ENCODE measurements at regions of chr12 and their contacts with region 1.

Region 1: GRCh38 chr12:130702966-130703732 is 12.9 kb downstream of the RIMBP2 start:
- DNase-seq: peak; percentile 72
- H3K4me3 ChIP-seq: no peak overlapping the region
- H3K27ac ChIP-seq: peak overlapping the region in 1 of 2 experiments; percentile 82; a peak in 2 of 4 replicates
- H3K4me1 ChIP-seq: peaks cover 0 to 51% of the 10 kb centered on the region in 2 experiments; a peak in 2 of 4 replicates
- H3K27me3 ChIP-seq: no peaks in the 10 kb centered on the region
- CTCF ChIP-seq: no peak
- EP300 ChIP-seq: no peak
- RAD21 ChIP-seq: no peak

Region 2: GRCh38 chr12:130563323-130563722 is 139.8 kb before region 1 on chr12:
- CTCF ChIA-PET with region 1: no interaction called
- POLR2A ChIA-PET with region 1: no interaction called
- DNase-seq: no peak
- H3K4me3 ChIP-seq: no peak overlapping the region
- H3K27ac ChIP-seq: peak overlapping the region in 1 of 2 experiments; percentile 60; a peak in 2 of 4 replicates
- H3K4me1 ChIP-seq: peaks cover 0 to 17% of the 10 kb centered on the region in 2 experiments; a peak in 2 of 4 replicates
- H3K27me3 ChIP-seq: no peaks in the 10 kb centered on the region
- CTCF ChIP-seq: no peak
- EP300 ChIP-seq: no peak
- RAD21 ChIP-seq: no peak

Region 3: GRCh38 chr12:130650131-130650530 is 53.0 kb before region 1 on chr12:
- CTCF ChIA-PET with region 1: no interaction called
- POLR2A ChIA-PET with region 1: no interaction called
- DNase-seq: peak; percentile 55
- H3K4me3 ChIP-seq: no peak overlapping the region
- H3K27ac ChIP-seq: peak overlapping the region in 1 of 2 experiments; percentile 58; a peak in 1 of 4 replicates
- H3K4me1 ChIP-seq: peaks cover 0 to 19% of the 10 kb centered on the region in 2 experiments; a peak in 1 of 4 replicates
- H3K27me3 ChIP-seq: no peaks in the 10 kb centered on the region
- CTCF ChIP-seq: no peak
- EP300 ChIP-seq: no peak
- RAD21 ChIP-seq: no peak

Region 4: DNA sequence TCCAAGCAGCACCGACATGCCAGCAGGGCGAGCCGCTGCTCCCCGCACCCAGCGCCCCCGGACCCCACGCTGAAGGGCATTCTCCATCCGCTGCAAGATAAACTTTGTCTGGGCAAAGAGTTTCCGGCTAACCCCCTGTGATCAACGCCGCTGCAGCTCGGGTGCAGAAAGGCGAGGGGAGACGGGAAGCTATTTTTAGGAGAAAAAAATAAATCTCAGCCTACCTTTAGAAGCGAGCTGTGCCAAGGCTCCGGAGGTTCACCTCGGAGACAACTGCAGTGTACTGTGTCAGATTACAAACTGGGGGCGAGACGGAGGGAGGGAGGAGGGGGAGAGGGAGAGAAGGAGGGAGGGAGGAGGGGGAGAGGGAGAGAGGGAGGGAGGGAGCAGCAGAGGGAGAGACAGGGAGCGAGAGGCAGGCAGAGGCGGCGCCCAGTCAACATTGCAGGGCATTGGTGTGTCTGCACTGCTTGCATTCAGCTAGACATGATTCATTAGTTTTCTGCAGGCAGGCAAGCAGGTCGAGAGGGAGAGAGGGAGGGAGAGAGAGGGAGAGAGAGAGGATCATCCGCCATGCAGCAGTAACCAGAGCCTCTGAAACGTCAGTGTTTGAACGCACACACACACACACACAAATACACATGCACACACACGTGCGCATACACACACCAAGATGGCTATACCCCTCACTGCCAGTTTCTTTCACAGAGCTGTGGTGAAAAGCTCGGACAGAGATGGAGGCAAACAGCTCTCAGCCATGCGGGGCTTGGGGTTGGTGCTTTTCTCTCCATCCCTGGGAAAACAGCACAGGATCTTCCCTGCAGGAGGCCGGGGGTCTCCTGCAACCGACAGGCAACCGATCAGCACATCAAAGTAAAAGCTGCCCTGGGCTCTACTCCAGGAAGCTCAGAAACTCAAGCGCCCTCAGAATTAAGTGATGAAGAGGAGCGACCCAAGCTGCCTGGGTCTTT is 13.1 kb after region 1 on chr12 and contains the start of gene RIMBP2:
- CTCF ChIA-PET with region 1: interaction called, 4 read pairs
- POLR2A ChIA-PET with region 1: interaction called, 10 read pairs
- DNase-seq: peak; percentile 62
- H3K4me3 ChIP-seq: peak within 1 kb of the TSS in 1 of 2 experiments; percentile 60; a peak in 2 of 4 replicates
- H3K27ac ChIP-seq: peak within 1 kb of the TSS in 1 of 2 experiments; percentile 84; a peak in 2 of 4 replicates
- H3K4me1 ChIP-seq: peaks cover 0 to 38% of the 10 kb centered on the region in 2 experiments; a peak in 1 of 4 replicates
- H3K27me3 ChIP-seq: no peaks in the 10 kb centered on the region
- CTCF ChIP-seq: no peak
- EP300 ChIP-seq: no peak
- RAD21 ChIP-seq: 0 out of 2 replicates have a peak, but pooled peaks have one; percentile 2
- polyA plus RNA-seq, gene RIMBP2: 0.90 and 1.1 TPM in 2 replicates

Region 5: DNA sequence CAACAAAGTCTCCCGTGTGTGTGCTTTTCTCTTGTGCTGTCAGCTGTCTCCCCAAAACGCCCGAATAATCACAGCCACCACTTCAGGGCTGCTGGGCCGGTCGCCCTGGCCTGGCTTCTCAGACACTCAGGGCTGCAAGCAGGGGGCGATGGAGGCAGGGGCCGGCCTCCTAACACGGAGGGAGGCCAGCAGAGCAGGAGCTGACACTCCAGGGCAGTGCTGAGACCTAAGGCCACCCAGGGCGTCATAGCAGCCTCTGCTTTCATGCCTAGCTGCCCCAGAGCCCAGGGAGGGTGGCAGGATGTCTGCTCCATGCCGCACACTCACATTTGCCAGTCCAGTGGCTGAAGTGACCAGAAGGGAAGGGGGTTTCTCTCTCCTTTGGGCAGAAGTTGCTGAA is 110.3 kb after region 1 on chr12:
- CTCF ChIA-PET with region 1: no interaction called
- POLR2A ChIA-PET with region 1: no interaction called
- DNase-seq: no peak
- H3K4me3 ChIP-seq: no peak overlapping the region
- H3K27ac ChIP-seq: no peak overlapping the region
- H3K4me1 ChIP-seq: peaks cover 0 to 21% of the 10 kb centered on the region in 2 experiments; a peak in 2 of 4 replicates
- H3K27me3 ChIP-seq: no peaks in the 10 kb centered on the region
- CTCF ChIP-seq: no peak
- EP300 ChIP-seq: no peak
- RAD21 ChIP-seq: no peak